ENCODE measurements at regions of chr6 and their contacts with region 1.

Region 1: DNA sequence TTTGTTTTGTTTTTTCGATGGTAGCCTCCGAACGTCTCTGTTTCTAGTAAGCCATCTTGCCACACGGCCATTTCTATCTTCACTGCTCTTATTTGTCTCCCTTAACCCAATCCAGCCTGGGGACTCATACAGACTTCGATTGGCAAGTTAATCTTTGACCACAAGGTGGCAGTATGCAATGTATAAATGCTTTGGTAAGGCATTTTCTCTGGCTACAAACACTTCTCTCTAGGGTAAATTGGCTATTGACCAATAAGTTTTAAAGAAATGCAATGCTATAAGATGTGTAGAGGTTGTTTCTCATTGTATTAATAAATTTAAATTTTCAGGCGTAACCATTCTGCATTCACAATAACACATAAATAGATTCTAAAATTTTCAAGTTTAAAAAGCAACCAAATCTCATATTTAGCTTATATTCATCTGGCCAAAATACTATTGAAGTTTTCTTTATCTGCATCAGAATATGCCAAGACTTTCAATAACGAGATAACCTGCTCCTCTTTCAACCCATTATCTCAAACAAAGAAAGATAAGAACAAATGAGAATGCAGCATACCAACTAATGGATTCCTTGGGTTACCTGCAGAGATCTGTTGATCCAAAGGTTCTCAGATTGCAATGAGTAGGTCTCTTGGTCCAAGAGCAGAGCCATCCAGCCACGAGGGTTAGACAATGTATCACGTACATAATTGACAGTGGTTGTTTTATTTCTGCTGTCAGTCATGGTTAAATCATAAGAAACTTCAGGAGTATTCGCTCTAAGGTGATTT is 231.9 kb downstream of the PKHD1 start:
- DNase-seq: peak; percentile 18
- ATAC-seq: no peak
- H3K4me3 Mint-ChIP-seq: no peak overlapping the region
- H3K27ac Mint-ChIP-seq: no peak overlapping the region
- H3K4me1 Mint-ChIP-seq: no peaks in the 10 kb centered on the region
- H3K27me3 Mint-ChIP-seq: peaks cover 10% of the 10 kb centered on the region

Region 2: DNA sequence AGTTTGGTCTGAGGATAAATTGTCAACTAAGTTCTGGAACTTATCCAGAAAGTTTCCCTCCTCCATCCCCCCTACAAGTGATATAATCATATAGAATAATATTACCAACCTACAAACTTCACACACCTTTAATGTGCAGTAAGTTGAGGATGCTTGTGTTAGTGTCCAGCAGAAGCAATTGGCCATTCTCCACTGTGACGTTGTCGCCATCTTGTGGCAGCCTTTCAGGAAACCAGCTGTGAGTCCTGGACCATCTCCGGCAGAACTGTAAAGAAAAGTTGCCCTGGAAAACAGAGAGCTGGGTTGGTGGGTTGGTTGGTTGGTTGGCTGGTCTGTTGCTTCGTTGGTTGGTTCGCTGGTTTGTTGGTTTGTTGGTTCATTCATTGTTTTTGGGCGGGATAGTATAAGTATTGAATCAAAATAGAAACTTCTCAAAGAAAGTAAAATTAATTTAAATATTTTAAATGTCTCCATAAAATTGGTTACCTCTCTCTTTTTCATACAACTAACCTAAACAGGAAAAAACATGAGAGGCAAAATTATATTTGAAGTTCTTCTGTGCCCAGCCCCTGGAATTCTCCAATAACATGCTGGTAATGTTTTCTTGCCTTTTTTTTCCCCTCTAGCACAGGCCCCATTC is 104.4 kb after region 1 on chr6:
- CTCF ChIA-PET with region 1: no interaction called
- POLR2A ChIA-PET with region 1: no interaction called
- intact Hi-C with region 1: loop called (anchors 1 kb)
- DNase-seq: peak; percentile 78
- ATAC-seq: no peak
- H3K4me3 Mint-ChIP-seq: no peak overlapping the region
- H3K27ac Mint-ChIP-seq: no peak overlapping the region
- H3K4me1 Mint-ChIP-seq: no peaks in the 10 kb centered on the region
- H3K27me3 Mint-ChIP-seq: peaks cover 5% of the 10 kb centered on the region

Region 3: GRCh38 chr6:52020945-52021570 is 165.6 kb after region 1 on chr6:
- CTCF ChIA-PET with region 1: interaction called, 4 read pairs
- POLR2A ChIA-PET with region 1: no interaction called
- intact Hi-C with region 1: loop called (anchors 1 kb)
- DNase-seq: no peak
- ATAC-seq: no peak
- H3K4me3 Mint-ChIP-seq: no peak overlapping the region
- H3K27ac Mint-ChIP-seq: no peak overlapping the region
- H3K4me1 Mint-ChIP-seq: no peaks in the 10 kb centered on the region
- H3K27me3 Mint-ChIP-seq: peaks cover 8% of the 10 kb centered on the region

Region 4: GRCh38 chr6:52049252-52050050 is 194.0 kb after region 1 on chr6:
- CTCF ChIA-PET with region 1: interaction called, 5 read pairs
- POLR2A ChIA-PET with region 1: no interaction called
- intact Hi-C with region 1: loop called in 1 of 2 experiments (anchors 1 kb)
- DNase-seq: peak; percentile 11
- ATAC-seq: no peak
- H3K4me3 Mint-ChIP-seq: no peak overlapping the region
- H3K27ac Mint-ChIP-seq: no peak overlapping the region
- H3K4me1 Mint-ChIP-seq: no peaks in the 10 kb centered on the region
- H3K27me3 Mint-ChIP-seq: peaks cover 14% of the 10 kb centered on the region

Region 5: DNA sequence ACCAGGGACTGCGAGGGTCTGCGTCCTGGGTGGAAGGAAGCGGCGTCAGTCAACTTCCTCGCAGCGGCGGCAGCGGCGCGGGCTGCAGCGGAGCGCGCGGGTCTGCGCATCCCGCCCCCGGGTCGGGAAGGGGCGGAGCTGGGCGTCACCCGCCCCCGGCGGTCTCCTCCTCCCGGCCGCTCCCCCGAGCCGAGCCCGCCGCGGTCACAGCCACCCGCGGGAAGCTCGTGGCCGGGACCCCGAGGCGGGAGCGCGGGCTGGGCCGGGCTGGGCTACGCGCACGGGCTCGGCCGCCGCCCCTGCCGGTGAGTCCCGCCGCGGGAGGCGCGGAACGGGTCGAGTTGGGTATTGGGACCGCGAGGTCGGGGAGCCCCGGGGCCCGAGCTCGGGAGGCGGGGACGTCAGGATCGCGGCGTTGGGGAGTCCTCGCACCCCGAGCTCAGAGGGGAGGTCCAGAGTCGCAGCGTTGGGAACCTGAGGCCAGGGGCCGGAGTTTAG is 506.5 kb after region 1 on chr6 and contains the start of gene PAQR8:
- CTCF ChIA-PET with region 1: no interaction called
- POLR2A ChIA-PET with region 1: no interaction called
- intact Hi-C with region 1: no loop called
- DNase-seq: peak; percentile 88
- ATAC-seq: peak; percentile 89
- H3K4me3 Mint-ChIP-seq: peak within 1 kb of the TSS; percentile 99
- H3K27ac Mint-ChIP-seq: peak within 1 kb of the TSS; percentile 94
- H3K4me1 Mint-ChIP-seq: peaks cover 42% of the 10 kb centered on the region
- H3K27me3 Mint-ChIP-seq: no peaks in the 10 kb centered on the region
- total RNA-seq, gene PAQR8: 9.0 to 9.1 TPM